ENCODE measurements at regions of chr6 and their contacts with region 1.

Region 1: GRCh38 chr6:33126101-33126714 is 50.4 kb downstream of the HLA-DPB1 start:
- DNase-seq: no peak
- ATAC-seq: peak; percentile 76
- H3K4me3 ChIP-seq: no peak overlapping the region
- H3K27ac ChIP-seq: no peak overlapping the region
- H3K4me1 ChIP-seq: peaks cover 14% of the 10 kb centered on the region
- H3K27me3 ChIP-seq: no peaks in the 10 kb centered on the region
- CTCF ChIP-seq: peak; percentile 48 to 77 (median 71)
- EP300 ChIP-seq: no peak
- POLR2A ChIP-seq: no peak
- RAD21 ChIP-seq: peak; percentile 30

Region 2: GRCh38 chr6:33000055-33000454 is 126.2 kb before region 1 on chr6:
- CTCF ChIA-PET with region 1: interaction called, 20 read pairs
- POLR2A ChIA-PET with region 1: interaction called, 4 read pairs
- RAD21 ChIA-PET with region 1: interaction called, 3 read pairs
- SMC1A ChIA-PET with region 1: interaction called, 6 read pairs
- in situ Hi-C with region 1: no loop called
- intact Hi-C with region 1: no loop called
- DNase-seq: no peak
- ATAC-seq: peak; percentile 89
- H3K4me3 ChIP-seq: no peak overlapping the region
- H3K27ac ChIP-seq: no peak overlapping the region
- H3K4me1 ChIP-seq: peaks cover 7% of the 10 kb centered on the region; the same call in 1 of the 2 replicates
- H3K27me3 ChIP-seq: no peaks in the 10 kb centered on the region
- CTCF ChIP-seq: peak; percentile 51 to 60 (median 53)
- EP300 ChIP-seq: no peak
- POLR2A ChIP-seq: no peak
- RAD21 ChIP-seq: peak; percentile 73

Region 3: GRCh38 chr6:33091957-33092356 is 34.3 kb before region 1 on chr6:
- CTCF ChIA-PET with region 1: interaction called, 8 read pairs
- POLR2A ChIA-PET with region 1: no interaction called
- RAD21 ChIA-PET with region 1: no interaction called
- SMC1A ChIA-PET with region 1: interaction called, 10 read pairs
- in situ Hi-C with region 1: no loop called
- intact Hi-C with region 1: no loop called
- DNase-seq: no peak
- ATAC-seq: peak; percentile 95
- H3K4me3 ChIP-seq: no peak overlapping the region
- H3K27ac ChIP-seq: no peak overlapping the region
- H3K4me1 ChIP-seq: no peaks in the 10 kb centered on the region
- H3K27me3 ChIP-seq: no peaks in the 10 kb centered on the region
- CTCF ChIP-seq: peak; percentile 77 to 88 (median 80)
- EP300 ChIP-seq: no peak
- POLR2A ChIP-seq: 0 out of 2 replicates have a peak, but pooled peaks have one; percentile 41
- RAD21 ChIP-seq: peak; percentile 58

Region 4: GRCh38 chr6:33139596-33140206 is 13.5 kb after region 1 on chr6:
- CTCF ChIA-PET with region 1: interaction called, 266 read pairs
- POLR2A ChIA-PET with region 1: interaction called, 5 read pairs
- RAD21 ChIA-PET with region 1: interaction called, 9 read pairs
- SMC1A ChIA-PET with region 1: interaction called, 127 read pairs
- in situ Hi-C with region 1: no loop called
- intact Hi-C with region 1: no loop called
- DNase-seq: no peak
- ATAC-seq: no peak
- H3K4me3 ChIP-seq: no peak overlapping the region
- H3K27ac ChIP-seq: no peak overlapping the region
- H3K4me1 ChIP-seq: peaks cover 8% of the 10 kb centered on the region
- H3K27me3 ChIP-seq: no peaks in the 10 kb centered on the region
- CTCF ChIP-seq: no peak
- EP300 ChIP-seq: no peak
- POLR2A ChIP-seq: no peak
- RAD21 ChIP-seq: no peak

Region 5: DNA sequence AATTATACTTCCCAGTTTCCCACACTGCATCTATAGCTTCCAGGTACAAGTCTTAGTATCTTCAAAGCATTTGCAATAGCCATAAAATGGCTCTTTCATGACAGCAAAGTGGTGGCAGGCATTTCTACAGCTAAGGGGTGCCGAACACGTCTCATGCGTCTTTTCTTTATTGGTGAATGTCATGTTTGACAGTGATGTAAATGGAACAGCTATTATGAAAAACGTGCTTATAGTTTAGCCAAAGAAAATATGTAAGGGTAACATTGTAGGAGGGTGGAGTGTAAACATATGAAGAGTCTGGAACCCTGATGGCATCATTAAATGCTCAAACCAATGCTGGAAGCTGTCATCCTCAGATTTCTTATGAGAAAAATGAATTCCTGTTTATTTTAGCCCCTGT is 28.1 kb after region 1 on chr6:
- CTCF ChIA-PET with region 1: interaction called, 266 read pairs
- POLR2A ChIA-PET with region 1: interaction called, 10 read pairs
- RAD21 ChIA-PET with region 1: interaction called, 19 read pairs
- SMC1A ChIA-PET with region 1: interaction called, 127 read pairs
- in situ Hi-C with region 1: no loop called
- intact Hi-C with region 1: loop called (anchors 2 kb)
- DNase-seq: no peak
- ATAC-seq: no peak
- H3K4me3 ChIP-seq: no peak overlapping the region
- H3K27ac ChIP-seq: no peak overlapping the region
- H3K4me1 ChIP-seq: no peaks in the 10 kb centered on the region
- H3K27me3 ChIP-seq: peaks cover 0 to 2% of the 10 kb centered on the region in 2 experiments; a peak in 3 of 4 replicates
- CTCF ChIP-seq: no peak
- EP300 ChIP-seq: no peak
- POLR2A ChIP-seq: no peak
- RAD21 ChIP-seq: no peak

Region 6: GRCh38 chr6:33172688-33173534 is 46.7 kb after region 1 on chr6:
- CTCF ChIA-PET with region 1: interaction called, 58 read pairs
- POLR2A ChIA-PET with region 1: interaction called, 4 read pairs
- RAD21 ChIA-PET with region 1: interaction called, 7 read pairs
- SMC1A ChIA-PET with region 1: interaction called, 15 read pairs
- in situ Hi-C with region 1: no loop called
- intact Hi-C with region 1: loop called (anchors 2 kb)
- DNase-seq: no peak
- ATAC-seq: peak; percentile 39
- H3K4me3 ChIP-seq: no peak overlapping the region
- H3K27ac ChIP-seq: no peak overlapping the region
- H3K4me1 ChIP-seq: no peaks in the 10 kb centered on the region; the same call in 1 of the 2 replicates
- H3K27me3 ChIP-seq: no peaks in the 10 kb centered on the region
- CTCF ChIP-seq: peak; percentile 80 to 83 (median 83)
- EP300 ChIP-seq: no peak
- POLR2A ChIP-seq: no peak
- RAD21 ChIP-seq: peak; percentile 96

Measured in GM12878 (cell line).